Psoas muscle (tissue), 8 donors: ENCODE measurements at regions of chr7 and their contacts with region 1.

Region 1: GRCh38 chr7:108146070-108146837 is 16.1 kb upstream of the LAMB4 start:
- DNase-seq: peak in 1 of 2 donors; percentile 33
- ATAC-seq: peak; percentile 36 to 70 (median 58)
- H3K4me3 ChIP-seq: no peak overlapping the region
- H3K27ac ChIP-seq: no peak overlapping the region
- H3K4me1 ChIP-seq: no peaks in the 10 kb centered on the region
- H3K27me3 ChIP-seq: no peaks in the 10 kb centered on the region
- CTCF ChIP-seq: peak; percentile 69

Region 2: DNA sequence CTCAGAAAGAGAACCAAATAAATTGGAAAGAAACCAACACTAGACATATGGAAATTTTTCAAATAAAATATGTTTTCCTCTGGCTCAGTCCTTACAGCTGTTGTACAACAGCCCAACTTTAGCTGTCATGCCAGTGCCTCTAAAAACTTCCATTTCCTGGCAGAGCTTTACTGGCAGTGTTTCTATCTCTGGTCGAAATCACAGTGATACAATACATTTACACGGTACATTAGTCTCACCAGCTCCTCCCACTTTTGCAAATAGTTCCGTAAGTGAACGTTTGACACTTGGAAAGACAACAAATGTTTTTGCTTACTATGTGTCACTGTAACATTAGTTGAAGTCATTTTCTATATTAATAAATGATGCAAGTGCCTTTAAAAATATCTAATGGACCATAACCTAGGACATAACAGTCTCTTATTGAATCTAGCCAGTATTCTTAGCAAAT is 536.4 kb before region 1 on chr7:
- intact Hi-C with region 1: no loop called
- DNase-seq: no peak
- ATAC-seq: peak; percentile 77 to 90 (median 86)
- H3K4me3 ChIP-seq: peak overlapping the region; percentile 41
- H3K27ac ChIP-seq: peak overlapping the region; percentile 74
- H3K4me1 ChIP-seq: peaks cover 28% of the 10 kb centered on the region
- H3K27me3 ChIP-seq: no peaks in the 10 kb centered on the region
- CTCF ChIP-seq: no peak

Region 3: GRCh38 chr7:107743567-107744344 is 402.5 kb before region 1 on chr7 and contains the start of gene CBLL1:
- intact Hi-C with region 1: loop called in 1 of 2 experiments (anchors 10 kb)
- DNase-seq: peak; percentile 98 to 99
- ATAC-seq: peak; percentile 98 to 99 (median 98)
- H3K4me3 ChIP-seq: peak within 1 kb of the TSS; percentile 91
- H3K27ac ChIP-seq: peak within 1 kb of the TSS; percentile 93
- H3K4me1 ChIP-seq: peaks cover 33% of the 10 kb centered on the region
- H3K27me3 ChIP-seq: no peaks in the 10 kb centered on the region
- CTCF ChIP-seq: peak; percentile 77
- total RNA-seq, gene CBLL1: 21.0 to 32.6 (median 26.1) TPM

Region 4: DNA sequence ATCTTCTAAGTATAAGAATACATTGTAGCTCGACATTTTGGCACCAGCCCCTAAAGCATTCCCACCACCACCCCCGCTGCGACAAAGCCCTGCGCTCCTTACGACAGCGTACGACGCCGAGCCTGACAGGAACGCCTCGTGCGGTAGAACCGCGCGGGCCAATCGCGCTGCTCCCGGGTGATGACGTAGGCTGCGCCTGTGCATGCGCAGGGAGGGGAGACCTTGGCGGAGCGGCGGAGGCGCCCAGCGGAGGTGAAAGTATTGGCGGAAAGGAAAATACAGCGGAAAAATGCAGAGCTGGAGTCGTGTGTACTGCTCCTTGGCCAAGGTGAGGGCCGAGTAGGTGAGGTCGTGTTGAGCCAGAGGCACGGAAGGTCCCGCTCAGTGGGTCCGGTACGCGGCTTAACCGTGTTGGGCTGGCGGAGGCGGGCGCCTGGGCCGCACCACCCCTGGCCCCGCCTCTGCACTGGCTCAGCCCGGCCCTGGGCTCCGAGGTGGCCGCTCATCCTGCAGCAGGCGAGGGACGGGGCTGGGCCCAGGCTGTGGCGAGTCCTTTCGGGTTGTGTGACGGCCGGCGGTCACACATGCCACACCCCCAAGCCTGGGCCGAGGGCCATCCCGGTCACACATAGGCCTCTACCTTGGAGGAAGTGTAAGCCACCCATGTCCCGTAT is 255.2 kb before region 1 on chr7 and contains the start of gene DLD:
- intact Hi-C with region 1: loop called in 1 of 2 experiments (anchors 5 kb)
- DNase-seq: peak; percentile 94 to 97
- ATAC-seq: peak; percentile 99 to 100 (median 99)
- H3K4me3 ChIP-seq: peak within 1 kb of the TSS; percentile 82
- H3K27ac ChIP-seq: peak within 1 kb of the TSS; percentile 96
- H3K4me1 ChIP-seq: peaks cover 36% of the 10 kb centered on the region
- H3K27me3 ChIP-seq: no peaks in the 10 kb centered on the region
- CTCF ChIP-seq: no peak
- total RNA-seq, gene DLD: 148 to 219 (median 161) TPM